GM12878 (cell line): ENCODE measurements at regions of chr14 and their contacts with region 1.

Region 1: GRCh38 chr14:76050797-76051392 is 65.3 kb downstream of the IFT43 start:
- DNase-seq: peak; percentile 21
- ATAC-seq: peak; percentile 82
- H3K4me3 ChIP-seq: no peak overlapping the region
- H3K27ac ChIP-seq: no peak overlapping the region
- H3K4me1 ChIP-seq: peaks cover under 1% of the 10 kb centered on the region; the same call in 1 of the 2 replicates
- H3K27me3 ChIP-seq: no peaks in the 10 kb centered on the region
- CTCF ChIP-seq: peak; percentile 53 to 88 (median 80); a peak in 5 of 6 replicates
- EP300 ChIP-seq: no peak
- POLR2A ChIP-seq: no peak
- RAD21 ChIP-seq: peak; percentile 100

Region 2: GRCh38 chr14:76007852-76008251 is 43.0 kb before region 1 on chr14:
- CTCF ChIA-PET with region 1: no interaction called
- POLR2A ChIA-PET with region 1: no interaction called
- RAD21 ChIA-PET with region 1: no interaction called
- SMC1A ChIA-PET with region 1: no interaction called
- in situ Hi-C with region 1: no loop called
- intact Hi-C with region 1: no loop called
- DNase-seq: no peak
- ATAC-seq: no peak
- H3K4me3 ChIP-seq: no peak overlapping the region
- H3K27ac ChIP-seq: no peak overlapping the region
- H3K4me1 ChIP-seq: no peaks in the 10 kb centered on the region
- H3K27me3 ChIP-seq: no peaks in the 10 kb centered on the region
- CTCF ChIP-seq: no peak
- EP300 ChIP-seq: no peak
- POLR2A ChIP-seq: no peak
- RAD21 ChIP-seq: no peak

Region 3: DNA sequence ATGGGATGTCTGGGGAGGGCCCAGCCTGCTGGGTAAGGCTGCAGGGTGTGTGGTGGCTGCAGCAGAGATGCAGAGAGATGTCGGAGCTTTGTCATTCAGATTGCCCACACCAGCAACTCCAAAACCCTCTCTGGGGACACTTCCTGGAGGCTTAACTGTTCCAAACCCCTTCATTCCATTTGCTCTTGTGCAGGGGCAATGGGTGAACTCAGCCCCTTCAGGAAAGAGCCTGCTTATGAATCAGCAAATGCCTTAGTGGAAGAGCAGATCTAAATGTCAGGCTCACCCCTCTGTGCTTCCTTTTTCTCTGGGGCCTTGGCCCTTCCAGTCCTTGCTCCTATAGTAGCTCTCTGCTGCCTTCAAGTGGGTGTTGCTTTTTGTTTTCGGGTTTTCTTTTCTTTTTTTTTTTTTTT is 64.1 kb after region 1 on chr14:
- CTCF ChIA-PET with region 1: interaction called, 10 read pairs
- POLR2A ChIA-PET with region 1: no interaction called
- RAD21 ChIA-PET with region 1: no interaction called
- SMC1A ChIA-PET with region 1: interaction called, 3 read pairs
- in situ Hi-C with region 1: no loop called
- intact Hi-C with region 1: no loop called
- DNase-seq: no peak
- ATAC-seq: no peak
- H3K4me3 ChIP-seq: no peak overlapping the region
- H3K27ac ChIP-seq: no peak overlapping the region
- H3K4me1 ChIP-seq: no peaks in the 10 kb centered on the region
- H3K27me3 ChIP-seq: no peaks in the 10 kb centered on the region
- CTCF ChIP-seq: peak in 2 of 3 experiments; percentile 9 to 14; a peak in 1 of 6 replicates
- EP300 ChIP-seq: no peak
- POLR2A ChIP-seq: no peak
- RAD21 ChIP-seq: peak; percentile 26; the same call in 1 of the 2 replicates

Region 4: DNA sequence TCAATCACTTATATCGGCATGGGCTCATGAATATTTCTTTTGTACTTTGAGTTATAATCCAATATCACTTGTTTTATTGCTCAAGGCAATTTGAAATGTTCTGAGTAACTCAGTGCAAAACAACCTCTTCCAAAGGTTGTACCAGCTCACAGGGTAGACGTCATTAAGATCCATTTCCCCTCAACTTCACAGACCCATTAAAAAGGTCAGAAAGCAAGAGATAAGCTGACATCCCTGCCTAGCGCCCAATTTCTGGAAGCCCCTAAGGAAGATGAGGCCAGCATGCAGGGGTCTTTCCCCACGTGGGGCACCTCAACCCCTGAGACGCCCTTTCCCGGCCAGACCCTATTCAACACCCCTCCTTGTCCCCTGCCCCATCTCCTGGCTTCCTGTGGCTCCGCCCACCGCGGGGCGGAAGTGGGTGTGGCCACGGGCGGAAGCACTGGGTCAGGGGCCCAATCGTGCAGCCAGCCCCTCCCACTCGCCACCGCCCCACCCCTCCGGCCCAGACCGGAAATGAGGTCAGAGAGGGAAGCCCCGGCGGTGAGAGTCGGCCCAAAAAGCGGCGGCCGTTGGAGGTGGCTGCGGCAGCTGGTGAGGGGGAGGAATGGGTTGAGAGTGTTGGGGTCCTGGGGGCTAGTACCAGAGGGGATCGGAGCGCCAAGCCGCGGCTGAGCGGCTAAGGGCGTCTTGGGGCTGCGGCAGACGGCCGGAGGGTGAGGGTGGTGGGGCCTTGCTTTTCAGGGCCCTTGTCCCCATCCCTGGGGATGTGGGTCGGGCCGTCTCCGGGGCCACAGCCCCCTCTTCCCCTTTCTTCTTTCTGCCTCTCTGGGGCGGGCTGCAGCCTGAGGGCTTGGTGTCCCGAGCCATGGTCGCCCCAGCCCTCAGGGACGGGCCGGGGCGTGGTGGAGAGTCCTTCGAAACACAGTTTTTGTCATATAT is 100.8 kb after region 1 on chr14 and contains the start of gene GPATCH2L:
- CTCF ChIA-PET with region 1: interaction called, 4 read pairs
- POLR2A ChIA-PET with region 1: no interaction called
- RAD21 ChIA-PET with region 1: interaction called, 3 read pairs
- SMC1A ChIA-PET with region 1: interaction called, 4 read pairs
- in situ Hi-C with region 1: no loop called
- intact Hi-C with region 1: loop called (anchors 5 kb)
- DNase-seq: peak; percentile 73
- ATAC-seq: peak; percentile 90
- H3K4me3 ChIP-seq: peak within 1 kb of the TSS; percentile 98
- H3K27ac ChIP-seq: peak within 1 kb of the TSS; percentile 92
- H3K4me1 ChIP-seq: peaks cover 6% of the 10 kb centered on the region; the same call in 1 of the 2 replicates
- H3K27me3 ChIP-seq: no peaks in the 10 kb centered on the region
- CTCF ChIP-seq: no peak
- EP300 ChIP-seq: no peak
- POLR2A ChIP-seq: peak; percentile 92
- RAD21 ChIP-seq: no peak
- polyA plus RNA-seq, gene GPATCH2L: 9.1 to 12.9 TPM

Region 5: DNA sequence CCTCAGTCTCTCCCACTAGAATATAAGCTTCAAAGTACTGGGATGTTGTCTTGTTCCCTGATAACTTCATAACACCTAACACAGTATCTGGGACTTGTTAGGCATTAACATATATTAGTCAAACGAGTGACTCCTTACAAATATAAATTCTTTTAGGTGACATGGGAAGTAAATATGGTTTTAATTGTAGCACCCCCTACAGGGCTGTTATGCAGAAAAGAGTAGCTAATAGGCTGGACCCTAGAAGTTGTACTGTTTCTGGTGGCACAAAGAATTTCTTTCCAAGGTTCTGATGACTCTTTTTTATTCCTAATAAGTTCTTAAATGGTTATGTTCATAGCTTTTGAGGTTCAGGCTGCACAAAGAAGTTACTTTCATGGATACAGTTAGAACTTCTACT is 130.7 kb after region 1 on chr14:
- CTCF ChIA-PET with region 1: interaction called, 21 read pairs
- POLR2A ChIA-PET with region 1: no interaction called
- RAD21 ChIA-PET with region 1: interaction called, 10 read pairs
- SMC1A ChIA-PET with region 1: interaction called, 13 read pairs
- in situ Hi-C with region 1: no loop called
- intact Hi-C with region 1: no loop called
- DNase-seq: no peak
- ATAC-seq: no peak
- H3K4me3 ChIP-seq: no peak overlapping the region
- H3K27ac ChIP-seq: no peak overlapping the region
- H3K4me1 ChIP-seq: peaks cover 17% of the 10 kb centered on the region
- H3K27me3 ChIP-seq: no peaks in the 10 kb centered on the region
- CTCF ChIP-seq: peak; percentile 11 to 25 (median 16); a peak in 1 of 6 replicates
- EP300 ChIP-seq: no peak
- POLR2A ChIP-seq: no peak
- RAD21 ChIP-seq: 0 out of 2 replicates have a peak, but pooled peaks have one; percentile 7

Region 6: GRCh38 chr14:76191297-76191696 is 140.4 kb after region 1 on chr14:
- CTCF ChIA-PET with region 1: interaction called, 4 read pairs
- POLR2A ChIA-PET with region 1: no interaction called
- RAD21 ChIA-PET with region 1: interaction called, 10 read pairs
- SMC1A ChIA-PET with region 1: interaction called, 13 read pairs
- in situ Hi-C with region 1: no loop called
- intact Hi-C with region 1: no loop called
- DNase-seq: no peak
- ATAC-seq: peak; percentile 48
- H3K4me3 ChIP-seq: no peak overlapping the region
- H3K27ac ChIP-seq: peak overlapping the region; percentile 99
- H3K4me1 ChIP-seq: peaks cover 48% of the 10 kb centered on the region
- H3K27me3 ChIP-seq: no peaks in the 10 kb centered on the region
- CTCF ChIP-seq: no peak
- EP300 ChIP-seq: no peak
- POLR2A ChIP-seq: no peak
- RAD21 ChIP-seq: no peak

Region 7: DNA sequence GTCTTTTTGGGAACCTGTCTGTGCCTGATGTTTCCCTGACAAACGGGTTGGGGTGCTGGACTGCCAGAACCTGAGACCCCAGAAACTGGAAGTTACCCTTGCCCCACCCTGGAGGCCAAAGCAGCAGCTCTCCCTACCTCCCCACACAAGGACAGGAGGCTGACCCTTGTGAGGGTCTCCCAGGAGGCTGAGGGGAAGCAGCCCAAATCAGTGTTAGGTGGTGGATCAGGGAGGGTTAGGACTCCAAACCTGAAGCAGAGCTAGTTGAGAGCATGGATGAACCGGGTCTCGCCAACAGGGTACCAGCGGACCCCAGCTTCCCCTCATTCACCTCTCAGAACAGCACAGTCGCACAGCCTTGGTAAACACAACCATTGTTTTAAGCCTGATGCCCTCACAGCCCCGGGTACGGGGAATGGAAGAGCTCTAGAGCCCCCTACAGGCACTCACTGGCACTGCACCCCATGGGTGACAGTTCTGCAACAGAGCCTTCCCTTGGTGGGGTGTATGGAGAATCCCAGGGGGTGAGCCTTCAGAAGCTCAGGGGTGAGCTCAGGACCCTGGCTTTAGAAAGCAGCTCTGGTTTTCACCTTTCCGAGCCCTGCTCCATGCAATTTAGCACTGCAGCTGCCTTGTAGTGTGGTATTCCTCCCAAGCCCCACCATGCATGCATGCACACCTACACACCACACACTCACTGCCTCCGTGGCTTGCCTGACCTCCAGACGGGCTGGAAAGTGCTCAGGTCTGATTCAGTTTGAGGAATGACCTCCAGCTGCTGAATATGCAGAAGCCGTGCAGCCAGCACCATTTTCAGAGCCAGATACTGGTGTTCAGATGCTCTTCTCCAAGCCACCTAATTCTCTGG is 336.3 kb after region 1 on chr14:
- CTCF ChIA-PET with region 1: interaction called, 72 read pairs
- POLR2A ChIA-PET with region 1: no interaction called
- RAD21 ChIA-PET with region 1: interaction called, 81 read pairs
- SMC1A ChIA-PET with region 1: interaction called, 60 read pairs
- in situ Hi-C with region 1: loop called (anchors 5 kb)
- intact Hi-C with region 1: loop called (anchors 1 kb)
- DNase-seq: peak; percentile 7
- ATAC-seq: peak; percentile 99
- H3K4me3 ChIP-seq: no peak overlapping the region
- H3K27ac ChIP-seq: no peak overlapping the region
- H3K4me1 ChIP-seq: no peaks in the 10 kb centered on the region
- H3K27me3 ChIP-seq: no peaks in the 10 kb centered on the region
- CTCF ChIP-seq: peak; percentile 99
- EP300 ChIP-seq: no peak
- POLR2A ChIP-seq: no peak
- RAD21 ChIP-seq: peak; percentile 98

Region 8: GRCh38 chr14:76647697-76648298 is 596.9 kb after region 1 on chr14:
- CTCF ChIA-PET with region 1: interaction called, 15 read pairs
- POLR2A ChIA-PET with region 1: no interaction called
- RAD21 ChIA-PET with region 1: interaction called, 4 read pairs
- SMC1A ChIA-PET with region 1: interaction called, 4 read pairs
- in situ Hi-C with region 1: loop called (anchors 5 kb)
- intact Hi-C with region 1: loop called (anchors 1 kb)
- DNase-seq: no peak
- ATAC-seq: peak; percentile 94
- H3K4me3 ChIP-seq: no peak overlapping the region
- H3K27ac ChIP-seq: no peak overlapping the region
- H3K4me1 ChIP-seq: no peaks in the 10 kb centered on the region
- H3K27me3 ChIP-seq: no peaks in the 10 kb centered on the region
- CTCF ChIP-seq: peak; percentile 75 to 88 (median 87)
- EP300 ChIP-seq: no peak
- POLR2A ChIP-seq: no peak
- RAD21 ChIP-seq: peak; percentile 71